BJ (cell line): ENCODE measurements at regions of chr9 and their contacts with region 1.

Region 1: DNA sequence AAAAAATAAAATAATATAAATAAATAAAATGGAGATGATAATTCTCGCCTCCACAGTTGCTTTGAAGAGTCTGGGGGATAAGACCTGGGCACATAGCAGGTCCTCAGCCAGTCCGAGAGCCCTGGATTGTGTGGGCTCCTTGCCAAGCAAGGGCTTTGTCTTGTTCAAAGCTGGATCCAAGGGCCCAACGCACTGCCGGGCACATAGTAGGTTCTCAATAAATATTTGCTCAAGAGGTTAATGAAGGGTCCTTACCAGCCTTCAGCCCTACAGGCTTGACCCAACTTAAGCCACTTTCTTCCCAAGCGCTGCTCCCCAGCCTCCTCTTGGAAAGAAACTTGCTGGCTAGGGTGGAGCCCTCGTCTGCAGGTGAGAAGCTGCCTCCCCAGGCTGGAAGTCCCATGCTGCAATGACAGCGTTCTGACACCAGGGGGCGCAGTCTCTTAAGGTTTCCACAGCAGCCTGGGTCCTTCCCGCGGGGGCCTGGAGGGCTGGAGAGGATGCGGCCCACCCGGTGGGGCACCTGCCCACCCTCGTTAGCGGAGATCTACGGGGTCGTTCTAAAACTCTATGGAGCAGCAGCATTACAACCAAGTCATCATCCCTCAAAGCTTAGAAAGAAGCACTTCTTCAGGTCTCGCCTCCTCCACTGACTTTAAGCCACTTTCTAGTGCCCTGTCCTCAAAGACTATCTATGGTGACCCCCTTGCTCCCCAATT is 115.2 kb downstream of the LHX2 start:
- DNase-seq: no peak
- H3K4me3 ChIP-seq: no peak overlapping the region
- H3K27me3 ChIP-seq: no peaks in the 10 kb centered on the region
- CTCF ChIP-seq: peak; percentile 94

Region 2: GRCh38 chr9:124110307-124110915 is 16.3 kb before region 1 on chr9:
- CTCF ChIA-PET with region 1: interaction called, 18 read pairs
- POLR2A ChIA-PET with region 1: interaction called, 4 read pairs
- DNase-seq: no peak
- H3K4me3 ChIP-seq: no peak overlapping the region
- H3K27me3 ChIP-seq: peaks cover 10% of the 10 kb centered on the region
- CTCF ChIP-seq: no peak

Region 3: GRCh38 chr9:124146031-124146561 is 19.4 kb after region 1 on chr9:
- CTCF ChIA-PET with region 1: no interaction called
- POLR2A ChIA-PET with region 1: no interaction called
- DNase-seq: no peak
- H3K4me3 ChIP-seq: no peak overlapping the region
- H3K27me3 ChIP-seq: peaks cover 4% of the 10 kb centered on the region; the same call in 1 of the 2 replicates
- CTCF ChIP-seq: no peak

Region 4: DNA sequence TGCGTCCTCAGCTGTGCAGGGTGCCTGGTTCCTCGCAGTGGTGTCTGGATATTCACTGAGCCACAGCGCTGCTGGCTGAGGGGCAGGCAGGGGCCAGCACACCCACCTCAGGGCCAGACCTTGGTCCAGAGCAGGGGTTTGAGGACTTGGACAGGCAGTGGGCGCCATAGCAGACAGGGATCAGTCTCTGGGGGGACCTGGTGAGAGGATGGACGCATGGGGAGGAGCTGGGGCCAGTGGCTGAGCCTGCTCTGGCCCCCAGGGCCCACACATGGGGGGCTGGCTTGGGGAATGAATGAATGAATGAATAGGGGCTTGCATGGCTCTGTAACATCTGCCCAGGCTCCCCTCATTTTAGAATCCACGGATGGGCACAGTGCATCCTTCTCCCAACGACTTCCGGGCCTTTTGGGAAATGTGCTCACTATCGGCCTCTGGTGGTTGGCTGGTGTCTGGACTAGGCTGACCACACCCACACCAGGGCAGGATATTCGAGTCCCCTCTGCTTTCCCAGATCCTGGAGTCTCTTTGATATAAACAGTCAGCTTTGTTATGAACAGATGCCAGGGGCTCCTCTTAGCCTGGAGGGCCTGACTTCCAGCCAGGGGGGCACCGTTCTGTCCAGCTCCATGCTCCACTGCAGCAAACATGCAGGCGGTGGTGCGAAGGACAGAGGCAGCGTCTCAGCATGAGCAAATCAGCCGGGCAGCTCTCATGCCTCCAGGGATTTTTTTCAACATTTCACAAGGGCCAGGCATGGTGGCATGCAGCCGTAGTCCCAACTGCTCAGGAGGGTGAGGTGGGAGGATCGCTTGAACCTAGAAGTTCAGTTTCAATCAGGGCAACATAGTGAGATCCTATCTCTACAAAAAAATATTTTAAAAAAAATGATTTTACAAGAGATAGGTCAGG is 193.6 kb after region 1 on chr9:
- CTCF ChIA-PET with region 1: interaction called, 23 read pairs
- POLR2A ChIA-PET with region 1: no interaction called
- DNase-seq: no peak
- H3K4me3 ChIP-seq: no peak overlapping the region
- H3K27me3 ChIP-seq: no peaks in the 10 kb centered on the region
- CTCF ChIP-seq: peak; percentile 96

Region 5: GRCh38 chr9:124353811-124354274 is 227.1 kb after region 1 on chr9:
- CTCF ChIA-PET with region 1: interaction called, 11 read pairs
- POLR2A ChIA-PET with region 1: no interaction called
- DNase-seq: peak; percentile 24
- H3K4me3 ChIP-seq: no peak overlapping the region
- H3K27me3 ChIP-seq: no peaks in the 10 kb centered on the region
- CTCF ChIP-seq: no peak

Region 6: DNA sequence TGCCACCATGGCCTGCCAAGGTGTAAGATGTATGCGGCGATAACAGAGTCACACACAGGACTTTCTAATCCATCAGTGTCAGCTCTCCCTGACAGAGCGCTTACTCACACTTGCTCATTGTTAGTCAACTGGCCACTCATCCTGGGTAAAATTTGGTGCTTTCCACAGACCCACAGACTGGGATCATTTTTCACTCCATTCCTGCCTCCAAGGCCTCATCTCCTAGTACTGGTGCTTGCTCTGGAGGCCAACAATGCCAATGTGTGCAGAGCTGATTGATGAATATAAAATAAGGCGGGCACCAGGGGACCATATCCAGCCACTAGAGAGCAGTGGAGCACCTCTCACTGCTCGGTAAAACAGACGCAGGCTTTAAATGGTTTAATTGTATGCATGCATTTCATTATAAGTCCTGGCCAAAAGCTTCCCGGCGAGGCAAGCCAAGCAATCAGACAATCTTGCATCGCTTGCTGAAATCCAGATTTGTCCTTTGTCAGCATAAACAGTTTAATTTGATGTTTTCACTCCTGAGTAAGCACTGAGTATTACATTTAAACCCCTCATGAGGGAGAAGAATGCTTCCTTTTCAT is 266.2 kb after region 1 on chr9:
- CTCF ChIA-PET with region 1: interaction called, 99 read pairs
- POLR2A ChIA-PET with region 1: no interaction called
- DNase-seq: peak; percentile 66
- H3K4me3 ChIP-seq: no peak overlapping the region
- H3K27me3 ChIP-seq: no peaks in the 10 kb centered on the region
- CTCF ChIP-seq: peak; percentile 65